PC-3 (cell line): ENCODE measurements at regions of chr11 and their contacts with region 1.

Region 1: DNA sequence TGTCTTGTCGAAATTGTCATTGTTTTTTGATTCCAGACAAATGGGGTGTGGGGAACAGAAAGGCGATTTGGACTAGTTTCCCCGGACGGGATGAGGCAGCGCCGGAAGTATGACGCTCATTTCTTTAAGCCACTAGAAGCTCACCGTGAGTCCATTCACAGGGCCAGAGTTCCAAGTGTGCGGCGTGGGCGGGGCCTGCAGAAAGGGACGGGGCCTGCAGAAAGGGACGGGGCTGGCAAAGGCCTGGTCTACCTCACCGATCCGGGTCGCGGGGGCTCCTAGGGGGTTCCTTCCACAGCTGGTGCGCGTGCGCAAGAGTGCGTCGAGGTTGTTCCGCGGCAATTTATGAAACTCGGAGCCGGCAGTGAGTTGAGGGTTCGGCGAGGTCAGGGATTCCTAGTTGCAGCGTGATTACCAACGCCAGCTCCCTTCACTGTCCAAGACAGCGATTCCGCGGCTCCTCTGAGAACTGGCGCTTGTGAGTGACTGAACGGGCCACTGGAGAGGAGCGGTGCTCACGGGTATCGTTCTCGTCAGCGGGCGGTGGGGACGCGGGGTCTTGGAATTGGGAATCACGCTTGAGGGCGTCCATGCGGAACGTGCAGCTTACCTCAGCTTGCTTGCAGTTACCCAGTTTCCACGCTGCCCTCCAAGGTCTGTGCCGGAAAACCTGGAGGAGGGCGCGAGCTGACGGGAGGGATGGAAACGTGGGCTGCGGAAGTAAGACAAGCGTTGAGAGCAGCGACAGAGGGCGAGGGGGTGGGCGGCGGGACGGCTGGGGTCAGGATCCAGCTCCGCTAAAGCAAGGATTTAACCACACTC is at the start of gene ZNF215:
- DNase-seq: peak; percentile 80
- ATAC-seq: peak; percentile 82
- H3K4me3 ChIP-seq: peak within 1 kb of the TSS; percentile 80
- H3K27ac ChIP-seq: peak within 1 kb of the TSS; percentile 34
- H3K4me1 ChIP-seq: peaks cover 13% of the 10 kb centered on the region; the same call in 1 of the 2 replicates
- H3K27me3 ChIP-seq: no peaks in the 10 kb centered on the region
- CTCF ChIP-seq: no peak
- total RNA-seq, gene ZNF215: 4.5 and 5.4 TPM in 2 replicates

Region 2: DNA sequence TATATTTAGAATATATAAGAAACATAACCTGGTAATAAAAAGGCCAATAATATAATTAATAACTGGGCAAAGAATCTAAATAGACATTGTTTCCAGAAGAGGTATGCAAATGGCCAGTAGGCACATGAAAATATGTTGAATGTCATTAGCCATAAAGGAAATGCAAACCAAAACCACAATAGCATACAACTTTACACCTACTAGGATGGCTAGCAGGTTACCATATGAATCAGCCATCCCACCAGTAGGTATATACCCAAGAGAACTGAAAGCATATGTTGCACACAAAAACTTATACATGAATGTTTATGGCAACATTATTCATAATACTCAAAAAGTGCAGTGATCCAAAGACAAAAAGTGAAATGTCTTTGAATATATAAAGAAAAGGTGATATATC is 31.4 kb before region 1 on chr11:
- CTCF ChIA-PET with region 1: no interaction called
- POLR2A ChIA-PET with region 1: no interaction called
- intact Hi-C with region 1: no loop called
- DNase-seq: no peak
- ATAC-seq: no peak
- H3K4me3 ChIP-seq: no peak overlapping the region
- H3K27ac ChIP-seq: no peak overlapping the region
- H3K4me1 ChIP-seq: no peaks in the 10 kb centered on the region
- H3K27me3 ChIP-seq: peaks cover 7% of the 10 kb centered on the region; the same call in 1 of the 2 replicates
- CTCF ChIP-seq: no peak

Region 3: GRCh38 chr11:6992457-6993417 is 66.3 kb after region 1 on chr11:
- CTCF ChIA-PET with region 1: interaction called, 4 read pairs
- POLR2A ChIA-PET with region 1: no interaction called
- intact Hi-C with region 1: loop called (anchors 5 kb)
- DNase-seq: peak; percentile 82
- ATAC-seq: peak; percentile 97
- H3K4me3 ChIP-seq: peak overlapping the region; percentile 23; the same call in 1 of the 2 replicates
- H3K27ac ChIP-seq: peak overlapping the region; percentile 46
- H3K4me1 ChIP-seq: peaks cover 15% of the 10 kb centered on the region
- H3K27me3 ChIP-seq: no peaks in the 10 kb centered on the region
- CTCF ChIP-seq: no peak